ENCODE measurements at regions of chr9 and their contacts with region 1.

Region 1: DNA sequence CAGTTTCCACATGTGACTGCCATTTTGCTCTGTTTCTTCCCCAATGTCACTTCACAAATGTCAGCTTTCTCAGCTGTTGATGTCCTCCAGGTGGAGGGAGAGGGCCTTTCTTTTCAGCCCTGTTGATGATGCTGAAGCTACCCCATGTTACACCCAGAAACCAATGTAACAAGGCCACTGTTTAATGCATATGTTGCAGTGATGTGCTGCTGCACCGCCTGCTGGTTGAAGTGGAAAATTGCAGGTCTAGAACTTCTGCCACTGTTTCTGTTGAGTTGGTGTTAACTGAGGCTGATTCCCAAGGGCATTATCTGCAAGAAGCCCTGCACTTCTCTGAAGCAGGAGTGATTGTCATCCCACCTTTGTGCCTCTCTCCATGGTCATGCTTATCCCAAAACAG is 428.4 kb downstream of the KDM4C start:
- DNase-seq: peak; percentile 22
- H3K4me3 ChIP-seq: no peak overlapping the region
- H3K27ac ChIP-seq: no peak overlapping the region
- H3K4me1 ChIP-seq: peaks cover 8% of the 10 kb centered on the region
- H3K27me3 ChIP-seq: peaks cover 0 to 3% of the 10 kb centered on the region in 2 experiments
- CTCF ChIP-seq: peak; percentile 54 to 66
- POLR2A ChIP-seq: no peak

Region 2: GRCh38 chr9:7094052-7094451 is 92.1 kb before region 1 on chr9:
- CTCF ChIA-PET with region 1: interaction called, 4 read pairs
- POLR2A ChIA-PET with region 1: no interaction called
- dilution Hi-C with region 1: no loop called
- intact Hi-C with region 1: loop called (anchors 5 kb)
- DNase-seq: peak; percentile 40
- H3K4me3 ChIP-seq: no peak overlapping the region
- H3K27ac ChIP-seq: no peak overlapping the region
- H3K4me1 ChIP-seq: peaks cover 19% of the 10 kb centered on the region
- H3K27me3 ChIP-seq: no peaks in the 10 kb centered on the region
- CTCF ChIP-seq: peak; percentile 15 to 28
- POLR2A ChIP-seq: no peak

Region 3: GRCh38 chr9:7117676-7118561 is 68.3 kb before region 1 on chr9:
- CTCF ChIA-PET with region 1: no interaction called
- POLR2A ChIA-PET with region 1: no interaction called
- dilution Hi-C with region 1: no loop called
- intact Hi-C with region 1: no loop called
- DNase-seq: no peak
- H3K4me3 ChIP-seq: no peak overlapping the region
- H3K27ac ChIP-seq: no peak overlapping the region
- H3K4me1 ChIP-seq: no peaks in the 10 kb centered on the region
- H3K27me3 ChIP-seq: no peaks in the 10 kb centered on the region
- CTCF ChIP-seq: no peak
- POLR2A ChIP-seq: no peak

Measured in endothelial cell of umbilical vein (primary cell).